CD4-positive, alpha-beta memory T cell (primary cell): ENCODE measurements at regions of chr1 and their contacts with region 1.

Region 1: DNA sequence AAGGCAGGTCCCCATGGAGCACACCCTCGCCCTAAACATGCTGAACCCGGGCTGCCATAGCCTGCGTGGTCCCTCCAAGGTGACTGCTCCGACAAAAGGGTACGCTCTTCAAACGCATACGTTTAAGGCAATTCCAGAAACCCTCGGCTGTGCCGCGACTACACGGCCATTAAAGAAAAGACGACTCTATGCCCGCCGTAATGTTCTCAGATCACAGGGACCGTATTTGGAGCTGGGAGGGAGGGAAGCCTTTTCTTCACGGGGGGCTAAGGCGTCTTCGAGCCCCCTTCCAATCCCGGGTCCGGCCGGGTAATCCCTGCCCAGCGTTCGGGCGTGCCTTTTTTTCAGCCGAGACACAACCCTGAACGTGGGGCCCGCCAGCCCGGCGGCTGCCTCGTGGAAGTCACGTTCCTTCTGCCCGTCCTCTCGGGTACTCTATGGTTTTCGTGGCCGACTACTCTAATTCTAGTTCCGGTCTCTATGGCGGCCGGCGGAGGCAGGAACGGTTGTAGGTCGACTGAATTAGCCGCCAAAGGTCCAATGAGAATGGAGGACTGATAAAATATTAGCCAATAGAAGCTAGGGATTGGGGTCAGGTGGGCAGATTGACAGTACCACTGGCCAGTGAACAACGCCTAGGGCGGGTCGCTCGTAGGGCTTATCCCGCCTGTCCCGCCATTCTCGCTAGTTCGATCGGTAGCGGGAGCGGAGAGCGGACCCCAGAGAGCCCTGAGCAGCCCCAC is at the start of gene YBX1:
- DNase-seq: peak; percentile 97 to 98 (median 97)
- H3K4me3 ChIP-seq: peak within 1 kb of the TSS; percentile 77 to 90
- H3K4me3 Mint-ChIP-seq: peak within 1 kb of the TSS; percentile 96 to 100 (median 98)
- H3K27ac ChIP-seq: peak within 1 kb of the TSS; percentile 78
- H3K27ac Mint-ChIP-seq: peak within 1 kb of the TSS; percentile 96 to 99 (median 99)
- H3K4me1 ChIP-seq: peaks cover 49% of the 10 kb centered on the region
- H3K4me1 Mint-ChIP-seq: peaks cover 43 to 61% (median 52%) of the 10 kb centered on the region in 4 donors
- H3K27me3 ChIP-seq: no peaks in the 10 kb centered on the region
- H3K27me3 Mint-ChIP-seq: no peaks in the 10 kb centered on the region
- total RNA-seq, gene YBX1: 328 TPM

Region 2: DNA sequence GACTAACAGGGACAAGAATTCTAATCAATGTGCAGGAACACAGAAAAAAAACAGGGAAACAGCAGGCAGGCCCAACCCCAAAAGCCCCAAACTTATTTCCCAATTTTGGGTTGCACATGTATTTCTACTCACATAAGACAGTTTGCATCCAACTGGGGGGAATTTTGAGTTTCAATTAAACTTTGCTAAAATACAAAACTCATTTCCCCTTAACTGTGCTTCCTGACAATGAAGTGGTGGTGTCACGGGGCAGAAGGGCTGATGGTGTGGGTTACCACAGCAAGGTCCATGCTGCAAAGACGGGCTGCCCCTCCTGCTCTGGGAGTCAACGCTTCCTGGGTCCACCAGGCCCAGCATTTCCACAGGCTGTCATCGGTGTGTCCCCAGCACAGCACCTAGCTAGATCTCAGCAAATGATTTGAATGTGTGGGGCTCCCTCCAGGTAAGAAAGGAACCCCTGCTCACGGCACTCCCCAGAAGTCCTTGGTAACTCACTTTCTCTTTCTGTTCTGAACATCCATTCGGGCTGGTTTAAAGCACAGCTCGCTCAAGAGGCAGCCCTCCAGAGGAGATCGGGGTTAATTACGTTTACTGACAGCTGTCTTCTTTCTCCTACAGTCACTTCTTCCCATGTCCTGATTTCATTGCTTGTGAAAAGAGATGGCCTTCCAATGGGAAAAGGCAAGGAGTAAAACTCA is 790.6 kb before region 1 on chr1:
- CTCF ChIA-PET with region 1: no interaction called
- POLR2A ChIA-PET with region 1: no interaction called
- intact Hi-C with region 1: loop called (anchors 10 kb)
- DNase-seq: peak; percentile 75 to 80 (median 77)
- H3K4me3 ChIP-seq: peak overlapping the region; percentile 48 to 73
- H3K4me3 Mint-ChIP-seq: peak overlapping the region; percentile 81 to 95 (median 87)
- H3K27ac ChIP-seq: peak overlapping the region; percentile 74
- H3K27ac Mint-ChIP-seq: peak overlapping the region; percentile 87 to 97 (median 95)
- H3K4me1 ChIP-seq: peaks cover 52% of the 10 kb centered on the region
- H3K4me1 Mint-ChIP-seq: peaks cover 37 to 66% (median 50%) of the 10 kb centered on the region in 4 donors
- H3K27me3 ChIP-seq: no peaks in the 10 kb centered on the region
- H3K27me3 Mint-ChIP-seq: peaks cover 0 to 2% of the 10 kb centered on the region in 2 donors

Region 3: DNA sequence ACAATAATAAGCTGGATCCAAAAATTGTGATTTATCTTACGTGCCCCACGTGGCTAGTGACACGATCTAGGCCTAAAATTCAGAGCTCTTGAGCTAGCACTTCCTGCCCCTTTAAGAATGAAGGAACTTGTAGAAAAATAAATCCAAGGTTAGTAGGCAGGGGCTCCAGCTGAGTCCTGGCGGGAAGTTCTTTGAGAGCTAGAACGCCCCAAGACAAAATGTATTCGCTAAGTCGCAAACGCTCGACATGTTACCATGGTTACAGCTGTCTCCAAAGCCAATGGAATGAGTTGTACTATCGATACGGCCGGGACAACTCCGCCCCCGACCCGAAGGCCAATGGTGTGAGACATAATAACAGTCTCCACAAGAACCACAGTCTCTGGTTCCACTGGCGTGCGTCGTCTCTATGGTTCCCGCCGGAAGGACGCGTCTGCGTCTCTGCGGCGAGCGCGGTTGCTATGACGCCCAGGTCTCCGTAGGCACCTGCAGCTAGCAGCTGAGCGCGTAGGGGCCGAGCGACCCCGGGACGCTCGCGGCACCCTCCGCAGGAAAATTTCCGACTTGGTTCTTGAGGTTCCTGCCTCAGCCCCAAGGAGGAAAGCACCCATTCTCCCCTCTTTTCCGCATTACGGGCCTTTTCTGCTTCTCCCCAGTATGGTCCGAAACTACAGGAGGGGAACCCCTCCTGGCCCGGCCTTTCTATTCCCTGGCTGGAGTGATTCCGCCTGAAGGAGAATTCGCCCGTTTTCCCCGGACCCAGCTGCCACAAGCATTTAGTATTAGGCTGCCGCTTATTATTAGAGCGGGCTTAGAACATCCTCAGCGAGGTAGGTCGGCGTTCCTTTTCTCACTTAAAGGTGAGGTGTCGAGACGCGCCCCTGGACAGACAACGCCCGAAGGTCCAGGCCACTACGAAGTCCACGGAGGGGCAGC is 218.8 kb before region 1 on chr1 and contains the start of gene CCDC30:
- CTCF ChIA-PET with region 1: no interaction called
- POLR2A ChIA-PET with region 1: interaction called, 10 read pairs
- intact Hi-C with region 1: loop called (anchors 1 kb)
- DNase-seq: peak; percentile 97 to 99 (median 98)
- H3K4me3 ChIP-seq: peak within 1 kb of the TSS; percentile 44
- H3K4me3 Mint-ChIP-seq: peak within 1 kb of the TSS; percentile 84 to 94 (median 86)
- H3K27ac ChIP-seq: peak within 1 kb of the TSS; percentile 74
- H3K27ac Mint-ChIP-seq: peak within 1 kb of the TSS; percentile 93 to 98 (median 97)
- H3K4me1 ChIP-seq: peaks cover 24% of the 10 kb centered on the region
- H3K4me1 Mint-ChIP-seq: peaks cover 17 to 44% (median 27%) of the 10 kb centered on the region in 4 donors
- H3K27me3 ChIP-seq: no peaks in the 10 kb centered on the region
- H3K27me3 Mint-ChIP-seq: no peaks in the 10 kb centered on the region
- total RNA-seq, gene CCDC30: 7.0 to 7.1 TPM

Region 4: DNA sequence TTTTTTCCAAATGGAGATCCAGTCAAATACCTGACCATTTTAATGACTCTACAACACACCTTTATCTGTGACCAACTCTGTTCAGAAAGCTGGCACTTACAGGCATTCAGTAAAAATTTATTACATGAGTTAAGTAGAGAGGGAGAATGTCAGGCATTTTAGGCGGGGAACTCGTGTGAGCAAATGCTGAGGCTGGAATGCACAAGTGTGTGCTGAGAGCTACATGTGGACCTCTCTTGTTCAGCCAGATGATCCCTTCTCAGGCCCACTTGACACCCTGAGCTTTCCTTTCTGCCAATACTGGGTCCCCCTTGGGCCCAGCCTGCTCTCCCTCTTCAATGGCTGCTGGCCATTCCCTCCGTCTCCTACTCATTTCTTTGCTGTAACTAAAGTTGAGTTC is 12.0 kb before region 1 on chr1:
- CTCF ChIA-PET with region 1: interaction called, 3 read pairs
- POLR2A ChIA-PET with region 1: interaction called, 19 read pairs
- intact Hi-C with region 1: no loop called
- DNase-seq: no peak
- H3K4me3 ChIP-seq: no peak overlapping the region
- H3K4me3 Mint-ChIP-seq: no peak overlapping the region
- H3K27ac ChIP-seq: no peak overlapping the region
- H3K27ac Mint-ChIP-seq: no peak overlapping the region
- H3K4me1 ChIP-seq: no peaks in the 10 kb centered on the region
- H3K4me1 Mint-ChIP-seq: peaks cover 0 to 3% (median 0%) of the 10 kb centered on the region in 4 donors
- H3K27me3 ChIP-seq: no peaks in the 10 kb centered on the region
- H3K27me3 Mint-ChIP-seq: no peaks in the 10 kb centered on the region

Region 5: DNA sequence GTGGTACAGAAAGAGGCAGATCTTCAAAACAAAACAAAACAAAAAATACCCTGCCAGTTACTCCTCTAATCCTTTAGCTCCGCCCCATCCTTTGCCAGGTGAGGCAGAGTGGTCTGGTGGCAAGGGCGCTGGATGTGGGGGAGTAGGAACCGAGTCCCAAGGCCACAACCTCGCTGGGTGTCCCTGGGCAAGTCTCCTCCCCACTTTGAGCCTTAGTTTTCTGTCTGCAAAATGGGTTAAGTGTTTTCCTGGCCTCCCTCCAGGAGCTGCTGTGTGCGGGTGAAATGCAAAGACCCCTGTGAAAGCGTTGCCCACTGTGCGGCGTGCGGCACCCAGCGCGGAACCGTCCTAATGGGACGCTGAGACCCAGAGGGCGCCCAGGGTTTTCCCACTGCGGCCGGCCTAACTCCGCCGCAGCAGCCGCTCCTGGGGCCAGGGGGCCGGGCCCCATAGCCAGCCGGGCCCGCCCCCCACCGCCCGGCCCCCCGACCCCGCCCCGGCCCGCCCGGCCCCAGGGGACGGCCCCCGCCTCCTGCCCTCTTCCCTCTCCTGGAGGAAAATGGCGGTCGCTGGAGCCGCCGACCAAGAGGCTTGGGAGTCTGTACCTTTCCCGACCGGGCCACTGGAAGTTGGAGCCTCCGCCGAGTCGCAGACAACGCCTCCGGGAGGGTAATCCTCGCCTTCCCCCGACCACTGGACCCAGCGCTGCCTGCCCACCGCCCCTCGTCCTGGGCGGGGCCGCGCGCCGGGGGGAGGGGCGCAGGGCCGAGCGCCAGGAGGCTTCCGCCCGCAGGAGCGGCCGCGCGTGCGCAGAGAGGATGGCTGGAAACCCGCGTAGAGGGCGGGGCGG is 134.9 kb after region 1 on chr1 and contains the starts of genes ERMAP and SVBP:
- CTCF ChIA-PET with region 1: no interaction called
- POLR2A ChIA-PET with region 1: interaction called, 24 read pairs
- intact Hi-C with region 1: loop called (anchors 5 kb)
- DNase-seq: peak; percentile 88 to 97 (median 92)
- H3K4me3 ChIP-seq: peak within 1 kb of the TSS; percentile 43 to 74
- H3K4me3 Mint-ChIP-seq: peak within 1 kb of the TSS; percentile 82 to 93 (median 86)
- H3K27ac ChIP-seq: peak within 1 kb of the TSS; percentile 87
- H3K27ac Mint-ChIP-seq: peak within 1 kb of the TSS; percentile 86 to 96 (median 94)
- H3K4me1 ChIP-seq: peaks cover 17% of the 10 kb centered on the region
- H3K4me1 Mint-ChIP-seq: peaks cover 19 to 32% (median 27%) of the 10 kb centered on the region in 4 donors
- H3K27me3 ChIP-seq: no peaks in the 10 kb centered on the region
- H3K27me3 Mint-ChIP-seq: no peaks in the 10 kb centered on the region
- total RNA-seq, gene ERMAP: 6.5 to 8.6 TPM
- total RNA-seq, gene SVBP: 20.4 to 23.5 TPM